Sigmoid colon (tissue), 7 donors: ENCODE measurements at regions of chr1 and their contacts with region 1.

Region 1: DNA sequence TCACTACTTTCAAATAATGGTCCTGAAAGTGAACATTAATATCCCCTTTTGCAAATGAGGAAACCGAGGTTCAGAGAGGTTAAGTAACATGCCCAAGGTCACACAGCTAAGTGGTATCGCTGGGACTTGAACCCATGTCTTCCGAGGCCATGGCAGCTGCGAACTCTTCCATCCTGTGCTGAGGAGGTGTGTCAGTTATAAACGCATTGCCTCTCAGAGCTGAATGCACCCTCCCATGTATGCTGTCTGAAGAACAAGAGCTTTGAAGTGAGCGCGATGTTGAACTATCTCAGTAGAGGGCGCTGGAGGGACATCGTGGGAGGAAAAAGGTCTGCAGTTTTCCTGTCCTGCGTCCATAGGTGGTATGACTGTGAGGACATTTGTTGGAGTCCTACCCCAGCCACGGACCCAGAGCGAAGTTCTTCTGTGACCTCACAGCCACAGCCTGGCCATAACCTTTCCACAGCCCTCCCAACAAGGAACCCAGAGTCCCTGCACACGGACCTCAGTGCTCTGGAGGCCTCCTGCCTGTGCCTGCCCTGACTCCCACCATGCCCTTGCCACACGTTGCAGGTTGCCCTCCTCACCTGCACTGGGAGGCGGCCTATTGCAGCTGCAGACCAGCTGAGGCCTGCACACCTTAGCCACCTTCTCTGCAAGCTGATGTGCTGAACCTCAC is 7.5 kb downstream of the MYOC start:
- DNase-seq: peak; percentile 93
- H3K4me3 ChIP-seq: no peak overlapping the region
- H3K27ac ChIP-seq: peak overlapping the region; percentile 72 to 83 (median 80)
- H3K4me1 ChIP-seq: peaks cover 0 to 21% (median 20%) of the 10 kb centered on the region in 4 donors
- H3K27me3 ChIP-seq: no peaks in the 10 kb centered on the region
- CTCF ChIP-seq: peak; percentile 63 to 89 (median 84)
- EP300 ChIP-seq: no peak
- POLR2A ChIP-seq: no peak

Region 2: GRCh38 chr1:171666114-171666769 is 21.3 kb after region 1 on chr1:
- intact Hi-C with region 1: loop called (anchors 2 kb)
- DNase-seq: peak; percentile 73
- H3K4me3 ChIP-seq: no peak overlapping the region
- H3K27ac ChIP-seq: peak overlapping the region in 2 of 4 donors; percentile 66 to 85
- H3K4me1 ChIP-seq: peaks cover 0 to 44% (median 31%) of the 10 kb centered on the region in 4 donors
- H3K27me3 ChIP-seq: no peaks in the 10 kb centered on the region
- CTCF ChIP-seq: no peak
- EP300 ChIP-seq: peak in 3 of 4 donors; percentile 47 to 74 (median 62)
- POLR2A ChIP-seq: no peak

Region 3: GRCh38 chr1:171727778-171728177 is 82.8 kb after region 1 on chr1:
- intact Hi-C with region 1: no loop called
- DNase-seq: no peak
- H3K4me3 ChIP-seq: no peak overlapping the region
- H3K27ac ChIP-seq: no peak overlapping the region
- H3K4me1 ChIP-seq: peaks cover 0 to 5% (median 0%) of the 10 kb centered on the region in 4 donors
- H3K27me3 ChIP-seq: no peaks in the 10 kb centered on the region
- CTCF ChIP-seq: no peak
- EP300 ChIP-seq: no peak
- POLR2A ChIP-seq: no peak

Region 4: GRCh38 chr1:171741872-171742576 is 97.1 kb after region 1 on chr1 and contains the start of gene VAMP4:
- intact Hi-C with region 1: loop called (anchors 2 kb)
- DNase-seq: peak; percentile 94
- H3K4me3 ChIP-seq: peak within 1 kb of the TSS; percentile 75 to 97 (median 90)
- H3K27ac ChIP-seq: peak within 1 kb of the TSS; percentile 91 to 98 (median 96)
- H3K4me1 ChIP-seq: peaks cover 0 to 29% (median 18%) of the 10 kb centered on the region in 4 donors
- H3K27me3 ChIP-seq: no peaks in the 10 kb centered on the region
- CTCF ChIP-seq: no peak
- EP300 ChIP-seq: peak in 1 of 4 donors; percentile 39
- POLR2A ChIP-seq: peak; percentile 74 to 86
- total RNA-seq, gene VAMP4: 13.0 to 16.9 (median 15.7) TPM

Region 5: GRCh38 chr1:171841050-171841940 is 196.4 kb after region 1 on chr1 and contains the start of gene DNM3:
- intact Hi-C with region 1: loop called (anchors 10 kb)
- DNase-seq: peak; percentile 91
- H3K4me3 ChIP-seq: peak within 1 kb of the TSS; percentile 65 to 82 (median 78)
- H3K27ac ChIP-seq: peak within 1 kb of the TSS; percentile 71 to 79 (median 75)
- H3K4me1 ChIP-seq: peaks cover 0 to 11% (median 4%) of the 10 kb centered on the region in 4 donors
- H3K27me3 ChIP-seq: no peaks in the 10 kb centered on the region
- CTCF ChIP-seq: no peak
- EP300 ChIP-seq: no peak
- POLR2A ChIP-seq: no peak
- total RNA-seq, gene DNM3: 3.9 to 13.3 (median 5.7) TPM